MCF 10A (cell line): ENCODE measurements at regions of chr19 and their contacts with region 1.

Region 1: DNA sequence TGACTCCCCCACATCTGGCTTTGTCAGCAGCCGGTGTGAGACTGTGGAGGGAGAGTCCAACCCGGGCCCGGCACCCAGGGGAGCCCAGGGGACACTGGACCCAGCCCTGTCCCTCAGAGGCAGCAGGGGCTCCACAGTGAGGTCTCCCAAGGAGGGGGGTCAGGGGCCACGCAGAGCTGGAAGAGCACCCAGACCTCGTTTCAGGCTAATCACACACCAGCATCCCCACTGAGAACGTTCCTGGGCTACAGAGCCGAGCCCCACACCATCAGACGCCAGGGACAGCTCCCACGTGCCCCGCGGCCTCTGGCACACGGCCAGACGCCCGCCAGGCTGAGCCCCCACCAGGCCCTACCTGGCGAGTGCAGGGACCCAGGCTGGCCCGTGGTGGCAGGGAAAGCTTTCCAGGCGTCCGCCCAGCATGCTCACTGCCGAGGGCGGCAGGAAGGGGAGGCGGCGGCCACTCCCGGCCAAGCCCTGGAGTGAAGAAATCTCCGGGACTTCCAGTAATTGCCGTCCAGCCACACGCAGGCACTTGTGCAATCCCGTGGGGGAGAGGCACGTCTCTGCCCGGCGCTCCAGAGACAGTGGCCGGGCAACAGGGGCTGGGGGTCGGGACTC is 19.2 kb downstream of the SBNO2 start:
- DNase-seq: peak; percentile 97
- H3K4me3 Mint-ChIP-seq: peak overlapping the region; percentile 62
- H3K27ac Mint-ChIP-seq: peak overlapping the region; percentile 83
- H3K4me1 Mint-ChIP-seq: peaks cover 5% of the 10 kb centered on the region
- H3K27me3 Mint-ChIP-seq: no peaks in the 10 kb centered on the region
- CTCF ChIP-seq: no peak

Region 2: DNA sequence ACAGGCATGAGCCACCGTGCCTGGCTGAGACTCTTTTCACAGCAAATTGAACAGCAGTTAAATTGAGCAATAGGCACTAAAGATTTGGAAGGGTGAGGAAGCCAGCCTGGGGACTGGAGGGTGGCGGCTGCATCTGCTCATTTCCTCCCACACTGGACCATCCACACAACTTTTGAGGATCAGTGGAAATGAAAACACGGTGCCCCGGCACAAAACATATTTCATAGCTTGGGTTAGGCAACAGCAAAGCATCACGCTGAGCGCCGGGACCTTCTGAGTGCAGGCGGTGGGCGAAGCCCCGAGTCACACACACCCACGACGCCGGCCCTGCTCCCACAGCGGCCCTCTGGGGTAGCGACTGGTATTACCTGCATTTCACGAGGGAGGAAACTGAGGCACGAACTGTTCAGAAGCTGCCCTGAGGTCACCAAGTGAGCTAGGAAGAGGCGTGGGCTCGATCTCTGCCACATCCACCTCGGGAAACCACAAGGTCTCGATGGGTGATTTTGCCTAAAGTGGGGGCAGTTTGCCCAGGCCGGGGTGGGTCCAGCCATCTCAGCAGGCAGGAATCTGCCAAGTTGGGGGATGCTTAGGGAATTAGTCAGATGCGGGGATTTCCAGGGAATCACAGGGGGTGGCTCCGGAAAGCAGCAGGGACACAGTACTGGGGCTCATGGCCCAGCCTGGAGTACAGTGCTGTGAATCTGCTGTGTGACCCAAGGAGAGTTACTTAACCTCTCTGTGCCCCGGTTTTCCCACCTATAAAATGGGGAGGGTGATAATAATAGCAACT is 22.7 kb after region 1 on chr19:
- CTCF ChIA-PET with region 1: no interaction called
- POLR2A ChIA-PET with region 1: interaction called, 12 read pairs
- intact Hi-C with region 1: no loop called
- DNase-seq: peak; percentile 99
- H3K4me3 Mint-ChIP-seq: peak overlapping the region; percentile 69
- H3K27ac Mint-ChIP-seq: peak overlapping the region; percentile 98
- H3K4me1 Mint-ChIP-seq: peaks cover 41% of the 10 kb centered on the region
- H3K27me3 Mint-ChIP-seq: no peaks in the 10 kb centered on the region
- CTCF ChIP-seq: peak; percentile 26